ENCODE measurements at regions of chr9 and their contacts with region 1.

Region 1: DNA sequence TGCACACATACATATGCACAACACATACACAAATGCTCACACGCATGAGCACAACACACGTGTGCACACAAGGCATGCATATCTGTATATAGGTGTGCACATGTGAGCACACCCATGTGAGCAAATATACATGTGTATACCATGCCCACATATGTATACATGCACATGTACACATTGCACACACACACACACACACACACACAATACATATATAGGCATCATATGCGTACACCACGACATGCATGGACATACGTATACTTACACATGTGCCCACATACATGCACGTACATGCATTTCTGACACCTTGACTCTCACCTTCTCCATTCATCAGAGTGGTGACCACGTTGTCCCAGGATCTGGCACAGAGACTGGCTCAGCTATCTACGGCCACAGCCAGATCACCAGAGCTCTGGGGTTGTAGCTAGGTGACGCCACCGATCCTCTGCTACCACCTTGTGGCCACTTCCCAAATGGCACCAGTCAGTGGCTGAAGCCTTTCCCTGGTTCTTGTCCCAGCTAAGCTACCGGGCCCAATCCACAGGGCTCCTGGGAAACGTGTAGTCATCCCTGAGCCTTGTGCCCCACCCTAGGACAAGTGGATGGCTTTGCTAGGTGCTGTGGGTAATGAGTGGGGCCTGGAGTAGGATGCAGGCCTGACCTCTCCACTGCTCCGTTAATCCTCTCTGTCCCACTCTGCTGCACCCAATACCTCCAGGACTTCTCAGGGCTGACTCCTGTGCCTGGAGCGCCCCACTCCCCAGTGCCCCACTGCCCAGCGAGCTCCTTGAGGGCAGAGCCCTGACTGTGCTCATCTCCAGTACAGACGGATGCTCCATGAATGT is 194.4 kb downstream of the RGS3 start:
- DNase-seq: peak; percentile 76 to 98
- H3K4me3 ChIP-seq: no peak overlapping the region
- H3K27ac ChIP-seq: no peak overlapping the region
- H3K4me1 ChIP-seq: peaks cover 0 to 12% (median under 1%) of the 10 kb centered on the region in 4 experiments; a peak in 6 of 7 replicates
- H3K27me3 ChIP-seq: no peaks in the 10 kb centered on the region
- CTCF ChIP-seq: peak; percentile 96 to 99 (median 97)
- EP300 ChIP-seq: no peak
- POLR2A ChIP-seq: no peak
- RAD21 ChIP-seq: peak; percentile 99 to 100

Region 2: DNA sequence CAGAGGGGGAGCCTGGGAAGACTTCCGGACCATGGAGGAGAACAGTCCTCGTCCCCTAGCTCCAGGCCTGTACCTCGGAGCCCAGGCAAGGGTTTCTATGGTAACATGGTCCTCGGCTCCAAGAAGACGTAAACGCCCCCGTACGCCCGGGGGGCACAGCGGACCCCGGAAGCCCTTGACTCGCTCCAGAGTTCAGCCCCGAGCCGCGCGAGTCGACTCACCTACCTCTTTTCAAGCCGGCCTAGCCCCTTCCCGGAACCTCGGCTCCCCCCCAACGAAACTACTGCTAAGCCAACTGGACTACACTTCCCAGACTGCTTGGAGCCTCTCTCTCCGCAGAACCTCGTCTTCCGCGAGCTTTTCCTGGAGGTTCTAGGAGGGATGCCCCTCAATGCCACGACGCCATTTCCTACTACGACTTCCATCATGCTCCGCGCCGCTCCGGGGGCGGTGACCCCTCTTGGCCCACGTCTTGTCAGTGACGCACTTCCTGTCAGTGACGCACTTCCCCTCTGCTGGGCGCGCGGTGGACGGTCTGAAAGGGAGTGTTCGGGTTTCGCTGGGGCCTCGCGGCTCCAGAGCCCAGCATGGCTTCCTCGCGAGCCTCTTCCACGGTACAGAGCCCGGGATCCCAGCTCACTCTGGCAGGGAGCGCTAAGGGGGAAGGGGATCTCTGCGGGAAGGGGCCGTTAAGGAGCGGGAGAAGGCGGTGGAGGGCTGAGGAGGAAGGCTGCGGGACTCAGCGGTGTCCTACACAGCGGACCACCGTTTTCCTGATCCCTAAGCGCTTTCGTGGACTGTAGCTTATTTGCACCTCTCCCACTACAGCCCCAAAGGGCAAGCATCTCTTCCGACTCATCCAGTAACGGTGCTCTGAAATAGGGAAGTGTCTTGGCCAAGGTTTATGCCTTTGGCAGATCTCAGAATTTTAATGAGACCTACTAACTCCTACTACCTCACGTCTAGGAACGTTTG is 382.5 kb before region 1 on chr9 and contains the starts of genes CDC26 and PRPF4:
- CTCF ChIA-PET with region 1: interaction called, 15 read pairs
- POLR2A ChIA-PET with region 1: no interaction called
- DNase-seq: peak; percentile 89 to 92
- H3K4me3 ChIP-seq: peak within 1 kb of the TSS; percentile 68 to 98 (median 90)
- H3K27ac ChIP-seq: peak within 1 kb of the TSS; percentile 93
- H3K4me1 ChIP-seq: peaks cover 0 to 4% (median 0%) of the 10 kb centered on the region in 4 experiments; a peak in 1 of 7 replicates
- H3K27me3 ChIP-seq: no peaks in the 10 kb centered on the region
- CTCF ChIP-seq: no peak
- EP300 ChIP-seq: no peak
- POLR2A ChIP-seq: peak; percentile 93 to 96
- RAD21 ChIP-seq: no peak
- total RNA-seq, gene CDC26: 41.9 and 42.8 TPM in 2 replicates
- total RNA-seq, gene PRPF4: 33.4 and 36.8 TPM in 2 replicates

Region 3: GRCh38 chr9:113446323-113446740 is 211.6 kb before region 1 on chr9:
- CTCF ChIA-PET with region 1: interaction called, 150 read pairs
- POLR2A ChIA-PET with region 1: interaction called, 5 read pairs
- DNase-seq: no peak
- H3K4me3 ChIP-seq: no peak overlapping the region
- H3K27ac ChIP-seq: no peak overlapping the region
- H3K4me1 ChIP-seq: no peaks in the 10 kb centered on the region
- H3K27me3 ChIP-seq: no peaks in the 10 kb centered on the region
- CTCF ChIP-seq: peak in 2 of 3 experiments; percentile 47; a peak in 2 of 4 replicates
- EP300 ChIP-seq: no peak
- POLR2A ChIP-seq: no peak
- RAD21 ChIP-seq: peak; percentile 86 to 88

Region 4: DNA sequence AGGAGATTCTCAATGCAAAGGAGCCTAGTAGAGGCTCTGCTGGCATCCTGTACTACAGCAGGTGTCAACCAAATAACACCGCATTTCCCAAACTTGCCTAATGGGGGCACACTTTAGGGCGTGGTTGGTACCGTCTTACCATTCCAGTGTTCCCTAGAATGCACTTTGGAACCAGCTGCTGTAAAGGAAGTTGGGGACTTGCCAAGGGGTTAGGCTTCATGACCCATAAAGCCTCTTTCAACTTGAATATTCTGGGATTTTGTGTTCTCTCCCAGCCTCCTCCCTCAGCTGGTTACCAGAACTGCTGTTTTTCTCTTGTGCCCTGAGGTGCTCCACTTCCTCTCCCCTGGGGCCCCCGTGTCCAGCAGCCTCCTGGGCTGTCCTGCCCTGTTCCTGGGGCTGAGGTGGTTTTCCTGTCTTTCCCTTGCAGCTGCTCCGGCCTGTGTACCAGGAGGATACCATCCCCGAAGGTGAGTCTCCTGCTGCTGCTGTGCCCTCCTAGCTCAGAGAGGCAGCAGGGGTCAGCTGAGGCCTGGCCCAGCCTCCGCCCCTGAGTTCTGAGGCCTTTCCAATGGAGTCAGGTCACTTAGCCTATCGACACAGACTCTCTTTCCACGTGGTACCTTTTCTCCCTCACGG is 149.7 kb before region 1 on chr9:
- CTCF ChIA-PET with region 1: interaction called, 27 read pairs
- POLR2A ChIA-PET with region 1: no interaction called
- DNase-seq: peak in 1 of 2 experiments; percentile 83
- H3K4me3 ChIP-seq: no peak overlapping the region
- H3K27ac ChIP-seq: no peak overlapping the region
- H3K4me1 ChIP-seq: peaks cover 6 to 10% (median 8%) of the 10 kb centered on the region in 4 experiments
- H3K27me3 ChIP-seq: no peaks in the 10 kb centered on the region
- CTCF ChIP-seq: peak; percentile 45 to 70 (median 50)
- EP300 ChIP-seq: no peak
- POLR2A ChIP-seq: no peak
- RAD21 ChIP-seq: peak; percentile 34 to 58; a peak in 3 of 4 replicates

Region 5: DNA sequence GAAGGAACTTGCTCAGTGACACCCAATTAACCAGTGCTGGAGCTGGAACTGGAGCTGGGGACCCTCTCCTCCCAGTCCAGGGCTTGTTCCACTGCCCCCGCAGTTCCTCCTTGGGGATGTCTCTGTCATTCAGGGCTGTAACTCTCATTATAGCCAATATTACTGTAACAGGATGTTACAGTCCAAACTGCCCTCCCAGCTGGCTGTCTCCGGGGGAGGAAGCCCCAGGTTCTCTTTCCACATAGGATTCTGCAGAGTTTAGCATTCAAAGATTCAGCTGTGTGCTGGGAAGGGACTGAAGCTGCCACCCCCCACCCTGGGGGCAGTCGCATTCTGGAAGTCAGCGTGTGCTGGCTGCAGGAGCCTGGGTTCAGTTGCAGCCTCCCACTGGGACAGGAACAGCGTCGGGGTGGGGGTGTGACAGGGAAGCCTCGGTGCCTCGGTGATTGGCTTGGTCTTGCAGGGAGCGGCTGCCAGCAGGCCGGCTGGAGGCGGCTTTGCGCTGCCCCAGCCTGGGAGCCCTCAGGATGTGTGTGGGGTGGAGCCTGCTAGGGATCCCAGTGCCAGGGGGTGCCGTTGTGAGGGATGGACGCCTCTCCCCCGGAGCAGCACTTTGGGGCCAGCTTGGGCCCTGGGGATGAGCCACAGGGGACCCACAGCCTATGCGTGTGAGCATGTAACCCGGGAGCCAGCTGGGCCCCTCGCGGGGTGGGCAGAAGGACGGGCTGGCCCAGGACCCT is 93.3 kb before region 1 on chr9:
- CTCF ChIA-PET with region 1: interaction called, 38 read pairs
- POLR2A ChIA-PET with region 1: no interaction called
- DNase-seq: peak in 1 of 2 experiments; percentile 68
- H3K4me3 ChIP-seq: peak overlapping the region; percentile 37 to 61 (median 48)
- H3K27ac ChIP-seq: no peak overlapping the region
- H3K4me1 ChIP-seq: peaks cover 4 to 23% (median 13%) of the 10 kb centered on the region in 4 experiments
- H3K27me3 ChIP-seq: peaks cover 0 to 5% (median 0%) of the 10 kb centered on the region in 4 experiments; a peak in 1 of 7 replicates
- CTCF ChIP-seq: no peak
- EP300 ChIP-seq: no peak
- POLR2A ChIP-seq: no peak
- RAD21 ChIP-seq: no peak

Region 6: DNA sequence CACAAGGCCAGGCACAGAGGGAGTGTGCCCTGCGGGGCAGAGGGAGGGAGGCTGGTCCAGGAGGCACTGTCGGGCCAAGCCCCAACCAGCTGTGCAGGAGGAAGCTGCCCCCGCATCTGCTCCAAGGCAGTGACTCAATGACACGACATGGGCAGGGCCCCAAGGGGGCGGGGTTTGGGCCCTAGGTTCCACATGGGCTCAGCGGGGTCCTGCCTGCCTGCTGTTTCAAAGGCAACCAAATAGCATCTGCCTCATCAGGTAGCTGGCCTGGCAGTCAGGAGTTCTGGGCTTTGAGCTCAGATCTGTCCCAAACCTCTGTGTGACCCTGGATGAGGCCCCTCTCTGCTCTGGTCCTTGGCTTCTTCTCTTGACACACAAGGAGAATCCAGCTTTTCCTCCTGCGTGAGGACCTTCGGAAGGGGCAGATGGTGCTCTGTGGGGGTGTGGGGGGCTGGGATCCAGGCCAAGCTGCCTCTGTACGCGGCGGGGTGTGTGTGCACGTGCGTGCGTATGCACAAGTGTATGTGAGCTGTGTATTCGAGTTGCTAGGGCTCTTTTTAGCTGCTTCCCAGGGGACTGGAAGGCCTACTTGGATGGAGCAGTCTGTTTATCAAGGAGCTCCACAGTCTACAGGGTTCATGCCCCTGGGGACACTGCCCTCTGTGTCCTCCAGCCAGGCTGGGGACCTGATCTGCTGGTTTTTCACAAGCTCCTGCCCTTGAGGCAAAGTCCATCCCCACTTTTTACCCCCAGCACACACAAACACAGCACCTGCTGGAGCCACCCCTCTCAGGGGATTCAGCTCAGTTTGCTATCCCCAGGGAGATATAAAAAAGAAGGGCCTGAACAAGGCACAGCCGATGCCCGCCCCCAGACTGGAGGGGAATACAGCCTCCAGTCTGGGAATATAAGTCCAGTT is 55.5 kb before region 1 on chr9:
- CTCF ChIA-PET with region 1: interaction called, 1,065 read pairs
- POLR2A ChIA-PET with region 1: interaction called, 14 read pairs
- DNase-seq: peak; percentile 59 to 87
- H3K4me3 ChIP-seq: no peak overlapping the region; a peak in 1 of 8 replicates
- H3K27ac ChIP-seq: peak overlapping the region; percentile 39; the same call in 1 of the 2 replicates
- H3K4me1 ChIP-seq: peaks cover 0 to 17% (median 12%) of the 10 kb centered on the region in 4 experiments; a peak in 6 of 7 replicates
- H3K27me3 ChIP-seq: no peaks in the 10 kb centered on the region
- CTCF ChIP-seq: no peak
- EP300 ChIP-seq: no peak
- POLR2A ChIP-seq: 0 out of 3 replicates have a peak, but pooled peaks of 1 of the 2 experiments have one; percentile 43
- RAD21 ChIP-seq: no peak

Region 7: DNA sequence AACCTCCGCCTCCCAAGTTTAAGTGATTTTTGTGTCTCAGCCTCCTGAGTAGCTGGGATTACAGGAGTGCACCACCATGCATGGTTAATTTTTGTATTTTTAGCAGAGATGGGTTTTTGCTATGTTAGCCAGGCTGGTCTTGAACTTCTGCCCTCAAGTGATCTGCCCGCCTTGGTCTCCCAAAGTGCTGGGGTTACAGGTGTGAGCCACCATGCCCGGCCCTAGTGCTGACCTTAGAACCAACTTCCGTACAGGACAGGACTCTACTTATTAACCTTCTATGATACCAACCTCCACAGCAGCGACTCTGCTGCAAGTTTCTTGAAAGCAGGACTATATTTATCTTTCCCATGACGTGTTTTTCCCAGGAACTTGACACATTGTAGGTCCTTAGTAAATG is 17.5 kb before region 1 on chr9:
- CTCF ChIA-PET with region 1: interaction called, 44 read pairs
- POLR2A ChIA-PET with region 1: interaction called, 3 read pairs
- DNase-seq: no peak
- H3K4me3 ChIP-seq: no peak overlapping the region
- H3K27ac ChIP-seq: no peak overlapping the region
- H3K4me1 ChIP-seq: peaks cover 0 to 3% (median 0%) of the 10 kb centered on the region in 4 experiments; a peak in 2 of 7 replicates
- H3K27me3 ChIP-seq: peaks cover 3 to 23% (median 13%) of the 10 kb centered on the region in 4 experiments
- CTCF ChIP-seq: no peak
- EP300 ChIP-seq: no peak
- POLR2A ChIP-seq: no peak
- RAD21 ChIP-seq: no peak

Region 8: DNA sequence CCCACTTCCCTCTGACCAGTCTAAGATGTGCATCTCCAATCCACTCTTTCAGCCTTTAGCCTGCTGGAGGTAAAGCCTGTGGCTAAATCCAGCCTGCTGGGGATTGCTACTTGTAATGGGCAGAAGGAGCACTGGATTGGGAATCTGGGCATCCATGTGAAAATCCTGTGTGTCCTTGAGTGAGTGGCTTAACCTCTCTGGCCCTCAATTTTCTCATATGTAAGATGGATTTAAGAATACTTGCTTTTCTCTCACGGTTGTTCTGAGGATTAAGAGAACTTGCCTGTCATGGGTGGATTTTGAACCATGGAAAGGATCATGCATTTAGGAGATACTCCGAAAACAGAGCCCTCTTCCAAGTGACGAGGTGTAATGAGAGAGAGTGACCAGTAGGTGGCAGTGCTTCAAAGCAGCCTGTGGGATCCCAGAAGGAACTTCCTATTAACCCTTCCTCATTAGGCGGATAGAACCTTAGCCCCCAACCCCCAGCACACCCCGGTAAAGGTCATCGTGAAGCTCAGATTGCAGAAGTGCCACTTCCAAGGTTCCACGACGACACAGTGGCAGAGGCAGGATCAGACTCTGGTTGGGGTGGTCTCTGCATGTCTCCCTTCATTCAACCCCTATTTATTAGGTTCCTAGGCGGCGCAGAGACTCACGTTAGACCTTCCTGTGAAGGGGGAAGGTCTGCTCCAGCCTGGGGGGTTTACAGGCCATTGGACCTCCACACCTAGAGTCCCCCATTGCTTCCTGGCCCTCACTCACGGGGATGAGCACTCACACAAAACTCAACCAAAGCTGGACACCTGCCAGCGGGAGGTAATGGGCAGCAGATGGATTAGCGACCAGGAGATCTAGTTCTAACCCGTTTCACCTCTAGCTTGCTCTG is 149.5 kb after region 1 on chr9:
- CTCF ChIA-PET with region 1: no interaction called
- POLR2A ChIA-PET with region 1: no interaction called
- DNase-seq: peak in 1 of 2 experiments; percentile 80
- H3K4me3 ChIP-seq: no peak overlapping the region
- H3K27ac ChIP-seq: no peak overlapping the region
- H3K4me1 ChIP-seq: 0 out of 7 replicates have a peak, but pooled peaks cover 0 to 3% (median 0%) of the 10 kb centered on the region in 4 experiments
- H3K27me3 ChIP-seq: no peaks in the 10 kb centered on the region
- CTCF ChIP-seq: peak; percentile 53 to 92 (median 77)
- EP300 ChIP-seq: no peak
- POLR2A ChIP-seq: no peak
- RAD21 ChIP-seq: peak; percentile 83 to 84